ENCODE measurements at regions of chr11 and their contacts with region 1.

Region 1: GRCh38 chr11:304915-305843 is 2.4 kb upstream of the IFITM2 start:
- DNase-seq: peak in 1 of 2 donors; percentile 60
- H3K4me3 ChIP-seq: no peak overlapping the region
- H3K27ac ChIP-seq: peak overlapping the region in 1 of 2 donors; percentile 98
- H3K4me1 ChIP-seq: peaks cover 0 to 9% of the 10 kb centered on the region in 2 donors
- H3K27me3 ChIP-seq: no peaks in the 10 kb centered on the region
- CTCF ChIP-seq: peak; percentile 17 to 79 (median 79)
- POLR2A ChIP-seq: no peak

Region 2: GRCh38 chr11:326842-327580 is 21.8 kb after region 1 on chr11:
- intact Hi-C with region 1: no loop called
- DNase-seq: peak in 1 of 2 donors; percentile 69
- H3K4me3 ChIP-seq: peak overlapping the region in 1 of 3 donors; percentile 50
- H3K27ac ChIP-seq: peak overlapping the region; percentile 83 to 96
- H3K4me1 ChIP-seq: peaks cover 0 to 13% of the 10 kb centered on the region in 2 donors
- H3K27me3 ChIP-seq: no peaks in the 10 kb centered on the region
- CTCF ChIP-seq: no peak
- POLR2A ChIP-seq: peak; percentile 7

Region 3: GRCh38 chr11:369336-370018 is 64.3 kb after region 1 on chr11 and contains the start of gene B4GALNT4:
- intact Hi-C with region 1: no loop called
- DNase-seq: no peak
- H3K4me3 ChIP-seq: peak within 1 kb of the TSS in 2 of 3 donors; percentile 49 to 68
- H3K27ac ChIP-seq: no peak within 1 kb of the TSS
- H3K4me1 ChIP-seq: peaks cover 0 to 4% of the 10 kb centered on the region in 2 donors
- H3K27me3 ChIP-seq: peaks cover 0 to 28% of the 10 kb centered on the region in 2 donors
- CTCF ChIP-seq: no peak
- POLR2A ChIP-seq: no peak
- total RNA-seq, gene B4GALNT4: 0.48 to 11.3 (median 8.2) TPM

Region 4: DNA sequence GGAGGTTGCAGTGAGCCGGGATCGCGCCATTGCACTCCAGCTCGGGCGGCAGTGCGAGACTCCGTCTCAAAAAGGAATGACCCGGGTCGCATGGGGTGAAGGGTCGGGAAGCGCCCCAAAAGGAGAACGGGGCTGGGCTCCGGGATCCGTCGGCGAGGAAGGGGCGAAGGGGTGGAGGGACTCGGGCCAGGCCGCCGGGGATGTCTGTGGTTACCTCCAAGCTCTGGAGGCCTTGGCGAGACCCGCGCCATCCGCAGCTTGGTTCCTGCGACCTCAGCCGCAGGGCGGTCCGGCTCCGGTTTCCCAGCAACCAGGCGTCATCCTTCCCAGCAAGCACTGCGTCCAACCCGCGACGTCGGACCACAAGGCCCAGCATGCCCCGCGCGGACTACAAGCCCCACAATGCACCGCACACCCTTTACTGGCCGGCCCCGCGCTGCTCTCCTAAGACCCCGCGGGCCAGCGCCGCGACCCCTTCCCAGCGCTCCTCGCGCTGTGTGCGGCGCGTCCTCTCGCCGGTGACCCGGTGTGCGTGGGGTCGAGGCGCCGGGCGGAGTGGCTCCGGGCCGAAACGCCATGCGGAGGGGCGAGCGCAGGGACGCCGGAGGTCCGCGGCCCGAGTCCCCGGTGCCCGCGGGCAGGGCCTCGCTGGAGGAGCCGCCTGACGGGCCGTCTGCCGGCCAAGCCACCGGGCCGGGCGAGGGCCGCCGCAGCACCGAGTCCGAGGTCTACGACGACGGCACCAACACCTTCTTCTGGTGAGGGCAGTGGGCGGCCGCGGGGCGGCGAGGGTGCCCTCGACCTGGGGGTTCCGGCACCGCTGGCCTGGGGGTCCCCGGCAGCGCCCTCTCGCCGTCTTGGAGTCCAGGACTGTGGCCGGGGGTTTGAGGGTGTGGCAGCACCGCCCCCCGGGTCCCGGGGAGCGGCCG is 145.0 kb after region 1 on chr11 and contains the start of gene PTDSS2:
- intact Hi-C with region 1: loop called (anchors 10 kb)
- DNase-seq: peak; percentile 94 to 96
- H3K4me3 ChIP-seq: peak within 1 kb of the TSS; percentile 89 to 96 (median 95)
- H3K27ac ChIP-seq: peak within 1 kb of the TSS; percentile 89 to 93
- H3K4me1 ChIP-seq: peaks cover 0 to 4% of the 10 kb centered on the region in 2 donors
- H3K27me3 ChIP-seq: no peaks in the 10 kb centered on the region
- CTCF ChIP-seq: no peak
- POLR2A ChIP-seq: peak; percentile 84
- total RNA-seq, gene PTDSS2: 23.8 to 53.7 (median 33.1) TPM

Measured in breast epithelium (tissue), 4 donors.